H1 (cell line): ENCODE measurements at regions of chr9 and their contacts with region 1.

Region 1: DNA sequence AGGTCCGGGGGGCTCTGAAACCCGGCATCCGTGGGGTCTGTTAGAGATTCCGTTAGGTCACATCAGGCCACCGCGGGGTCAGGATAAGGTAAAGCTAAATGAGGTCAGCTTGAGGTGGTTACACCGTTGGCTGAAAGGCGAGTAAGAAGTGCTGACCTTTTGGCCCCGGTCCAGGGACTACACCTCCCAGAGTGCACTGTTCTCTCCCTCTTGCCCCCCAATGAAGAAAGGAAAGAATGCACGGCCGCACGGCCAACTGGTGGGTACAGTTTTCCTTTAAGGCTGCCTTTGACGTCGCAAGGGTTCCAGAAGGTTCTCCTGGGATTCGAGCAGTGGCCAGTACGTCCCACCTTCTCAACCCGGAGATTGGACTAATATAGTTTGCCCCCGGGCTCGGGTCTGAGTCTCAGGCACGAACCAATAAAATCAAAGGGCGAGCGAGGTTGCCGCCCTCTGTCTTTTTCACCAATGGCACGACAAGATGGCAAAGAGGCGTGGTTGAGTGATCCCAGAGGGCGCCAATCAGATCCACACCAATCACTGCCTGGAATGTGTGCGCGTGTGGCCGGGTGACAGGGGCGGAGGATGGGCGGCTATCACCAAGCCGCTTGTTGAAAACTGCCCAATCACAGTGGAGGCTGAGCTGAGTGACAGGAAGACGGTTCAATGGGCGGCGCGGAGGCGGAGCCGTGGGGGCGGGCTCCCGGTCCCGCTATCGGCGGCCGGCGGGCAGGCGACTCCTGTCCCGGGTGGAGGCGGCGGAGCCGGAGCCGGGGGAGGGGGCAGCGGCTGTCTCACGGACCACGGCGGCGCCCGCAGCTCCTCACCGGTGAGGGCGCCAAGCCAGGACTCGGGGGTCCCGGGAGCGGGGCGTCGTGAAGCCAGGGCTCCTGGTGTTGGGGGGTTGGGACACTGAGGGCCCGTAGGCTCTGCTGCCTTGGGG is at the start of gene DNAJB5:
- DNase-seq: peak; percentile 98 to 100
- H3K4me3 ChIP-seq: peak within 1 kb of the TSS; percentile 65 to 94 (median 74)
- H3K27ac ChIP-seq: peak within 1 kb of the TSS; percentile 90
- H3K4me1 ChIP-seq: peaks cover 17 to 46% (median 34%) of the 10 kb centered on the region in 4 experiments
- H3K27me3 ChIP-seq: no peaks in the 10 kb centered on the region
- CTCF ChIP-seq: no peak
- EP300 ChIP-seq: no peak
- POLR2A ChIP-seq: peak; percentile 47 to 64
- RAD21 ChIP-seq: no peak
- total RNA-seq, gene DNAJB5: 34.1 and 38.0 TPM in 2 replicates

Region 2: GRCh38 chr9:34759432-34760134 is 229.7 kb before region 1 on chr9:
- CTCF ChIA-PET with region 1: interaction called, 16 read pairs
- POLR2A ChIA-PET with region 1: no interaction called
- DNase-seq: no peak
- H3K4me3 ChIP-seq: no peak overlapping the region
- H3K27ac ChIP-seq: no peak overlapping the region
- H3K4me1 ChIP-seq: no peaks in the 10 kb centered on the region
- H3K27me3 ChIP-seq: no peaks in the 10 kb centered on the region
- CTCF ChIP-seq: no peak
- EP300 ChIP-seq: no peak
- POLR2A ChIP-seq: no peak
- RAD21 ChIP-seq: no peak

Region 3: DNA sequence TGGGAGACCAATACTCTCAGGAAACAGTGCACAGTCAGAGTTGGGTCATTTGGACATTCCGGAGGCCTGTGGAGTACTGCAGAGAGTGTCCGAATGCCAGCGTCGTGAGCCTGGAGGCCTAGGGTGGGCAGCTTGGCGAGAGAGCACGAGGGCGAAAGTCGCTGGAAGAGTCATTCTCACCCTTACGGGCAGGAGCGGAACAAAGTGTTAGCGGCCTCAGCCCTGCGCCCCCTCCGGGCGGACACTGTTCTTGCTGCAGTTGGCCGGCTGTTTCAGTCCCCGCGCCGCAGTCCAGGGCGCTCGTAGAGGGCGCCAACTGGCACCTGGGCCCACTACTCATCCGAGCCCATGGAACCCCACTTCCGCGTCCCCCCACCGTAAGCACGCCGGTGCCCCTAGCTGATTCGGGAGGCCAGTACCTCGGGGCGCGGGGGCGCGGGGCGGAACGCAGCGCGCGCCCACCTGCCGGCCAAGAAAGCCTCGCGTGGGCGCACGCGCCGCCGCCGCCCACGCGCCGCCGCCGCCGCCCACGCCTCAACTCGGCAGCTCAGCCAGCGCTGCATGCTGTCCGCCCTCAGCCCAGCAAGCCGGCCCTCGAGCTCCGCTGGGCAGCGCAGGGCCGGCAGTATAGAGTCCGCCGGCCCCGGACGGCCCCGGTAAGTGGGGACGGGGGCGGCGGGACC is 179.6 kb before region 1 on chr9:
- CTCF ChIA-PET with region 1: no interaction called
- POLR2A ChIA-PET with region 1: no interaction called
- DNase-seq: peak; percentile 49 to 83
- H3K4me3 ChIP-seq: peak overlapping the region; percentile 18 to 54 (median 28); a peak in 7 of 8 replicates
- H3K27ac ChIP-seq: no peak overlapping the region
- H3K4me1 ChIP-seq: peaks cover 0 to 3% (median 0%) of the 10 kb centered on the region in 4 experiments; a peak in 2 of 7 replicates
- H3K27me3 ChIP-seq: peaks cover 0 to 25% (median 12%) of the 10 kb centered on the region in 4 experiments; a peak in 5 of 7 replicates
- CTCF ChIP-seq: peak; percentile 77 to 86 (median 79)
- EP300 ChIP-seq: no peak
- POLR2A ChIP-seq: no peak
- RAD21 ChIP-seq: peak; percentile 43 to 62

Region 4: GRCh38 chr9:34929506-34930102 is 59.7 kb before region 1 on chr9:
- CTCF ChIA-PET with region 1: interaction called, 10 read pairs
- POLR2A ChIA-PET with region 1: interaction called, 3 read pairs
- DNase-seq: peak; percentile 13 to 66
- H3K4me3 ChIP-seq: no peak overlapping the region
- H3K27ac ChIP-seq: no peak overlapping the region
- H3K4me1 ChIP-seq: no peaks in the 10 kb centered on the region
- H3K27me3 ChIP-seq: no peaks in the 10 kb centered on the region
- CTCF ChIP-seq: peak; percentile 56 to 81 (median 66)
- EP300 ChIP-seq: no peak
- POLR2A ChIP-seq: no peak
- RAD21 ChIP-seq: peak; percentile 42 to 50

Region 5: DNA sequence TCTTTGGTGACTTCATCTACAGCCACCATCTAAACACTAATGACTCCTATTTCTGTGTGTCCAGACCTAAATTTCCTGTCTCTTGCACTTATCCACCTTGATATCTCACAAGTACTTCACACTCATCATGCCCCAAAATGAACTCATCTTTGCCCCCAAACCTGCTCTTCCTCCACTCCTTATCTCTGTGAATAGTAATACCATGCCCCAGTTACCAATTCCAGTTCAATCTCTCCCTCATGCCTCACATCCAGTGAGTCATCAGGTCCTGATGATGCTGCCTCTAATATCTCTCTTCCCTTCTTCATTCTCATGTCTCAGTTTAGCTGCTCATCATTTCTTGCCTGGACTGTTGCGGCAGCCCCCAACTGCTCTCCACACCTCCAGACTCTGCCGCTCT is 14.6 kb before region 1 on chr9:
- CTCF ChIA-PET with region 1: interaction called, 58 read pairs
- POLR2A ChIA-PET with region 1: interaction called, 4 read pairs
- DNase-seq: no peak
- H3K4me3 ChIP-seq: no peak overlapping the region
- H3K27ac ChIP-seq: no peak overlapping the region
- H3K4me1 ChIP-seq: peaks cover 0 to 5% (median 3%) of the 10 kb centered on the region in 4 experiments; a peak in 5 of 7 replicates
- H3K27me3 ChIP-seq: no peaks in the 10 kb centered on the region
- CTCF ChIP-seq: no peak
- EP300 ChIP-seq: no peak
- POLR2A ChIP-seq: no peak
- RAD21 ChIP-seq: no peak

Region 6: GRCh38 chr9:35051069-35051967 is 62.0 kb after region 1 on chr9:
- CTCF ChIA-PET with region 1: interaction called, 43 read pairs
- POLR2A ChIA-PET with region 1: interaction called, 12 read pairs
- DNase-seq: peak in 1 of 2 experiments; percentile 84
- H3K4me3 ChIP-seq: no peak overlapping the region
- H3K27ac ChIP-seq: no peak overlapping the region
- H3K4me1 ChIP-seq: no peaks in the 10 kb centered on the region
- H3K27me3 ChIP-seq: no peaks in the 10 kb centered on the region
- CTCF ChIP-seq: peak in 2 of 3 experiments; percentile 63 to 78; a peak in 3 of 4 replicates
- EP300 ChIP-seq: no peak
- POLR2A ChIP-seq: no peak
- RAD21 ChIP-seq: peak; percentile 58 to 64

Region 7: DNA sequence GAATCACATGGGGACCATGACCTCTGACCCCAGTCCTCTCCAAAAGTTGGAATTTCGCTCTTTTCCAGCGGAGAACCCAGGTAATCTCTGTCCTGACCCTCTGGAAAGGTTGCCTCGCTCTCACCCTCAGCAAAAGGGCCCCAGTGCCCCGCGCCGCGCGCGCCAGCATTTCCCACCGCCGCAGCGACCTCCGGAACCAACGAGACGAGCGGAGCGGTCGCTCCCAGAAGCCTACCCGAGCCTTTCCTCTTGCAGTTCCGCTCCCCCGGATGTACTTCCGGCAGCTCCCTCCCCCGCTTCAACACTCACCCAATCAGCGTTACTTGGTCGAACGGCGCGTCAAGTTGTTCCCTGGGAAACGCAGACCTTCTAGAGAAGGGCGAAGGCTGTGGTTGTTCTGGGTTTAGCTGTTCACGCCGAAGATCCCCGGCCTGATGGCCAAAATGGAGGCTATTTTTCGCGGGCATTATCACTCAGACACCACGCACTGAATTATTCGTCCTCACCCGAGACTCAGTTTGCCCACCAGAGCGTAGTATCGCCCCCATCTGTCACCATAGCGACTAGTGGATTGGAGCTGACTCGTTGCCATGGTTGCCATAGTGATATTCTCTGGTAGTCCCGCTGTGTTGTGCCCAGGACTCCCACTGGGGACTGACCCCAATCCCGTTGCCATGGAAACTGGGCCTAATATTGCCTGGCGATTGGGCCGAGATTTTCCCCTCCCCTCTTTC is 113.8 kb after region 1 on chr9 and contains the start of gene STOML2:
- CTCF ChIA-PET with region 1: interaction called, 4 read pairs
- POLR2A ChIA-PET with region 1: interaction called, 18 read pairs
- DNase-seq: peak; percentile 89 to 91
- H3K4me3 ChIP-seq: peak within 1 kb of the TSS; percentile 71 to 99 (median 98)
- H3K27ac ChIP-seq: peak within 1 kb of the TSS; percentile 96
- H3K4me1 ChIP-seq: peaks cover 0 to 17% (median 6%) of the 10 kb centered on the region in 4 experiments; a peak in 5 of 7 replicates
- H3K27me3 ChIP-seq: no peaks in the 10 kb centered on the region
- CTCF ChIP-seq: no peak
- EP300 ChIP-seq: no peak; a peak in 1 of 3 replicates
- POLR2A ChIP-seq: peak; percentile 79 to 85
- RAD21 ChIP-seq: no peak
- total RNA-seq, gene STOML2: 203 and 208 TPM in 2 replicates